PC-3 (cell line): ENCODE measurements at regions of chr10 and their contacts with region 1.

Region 1: DNA sequence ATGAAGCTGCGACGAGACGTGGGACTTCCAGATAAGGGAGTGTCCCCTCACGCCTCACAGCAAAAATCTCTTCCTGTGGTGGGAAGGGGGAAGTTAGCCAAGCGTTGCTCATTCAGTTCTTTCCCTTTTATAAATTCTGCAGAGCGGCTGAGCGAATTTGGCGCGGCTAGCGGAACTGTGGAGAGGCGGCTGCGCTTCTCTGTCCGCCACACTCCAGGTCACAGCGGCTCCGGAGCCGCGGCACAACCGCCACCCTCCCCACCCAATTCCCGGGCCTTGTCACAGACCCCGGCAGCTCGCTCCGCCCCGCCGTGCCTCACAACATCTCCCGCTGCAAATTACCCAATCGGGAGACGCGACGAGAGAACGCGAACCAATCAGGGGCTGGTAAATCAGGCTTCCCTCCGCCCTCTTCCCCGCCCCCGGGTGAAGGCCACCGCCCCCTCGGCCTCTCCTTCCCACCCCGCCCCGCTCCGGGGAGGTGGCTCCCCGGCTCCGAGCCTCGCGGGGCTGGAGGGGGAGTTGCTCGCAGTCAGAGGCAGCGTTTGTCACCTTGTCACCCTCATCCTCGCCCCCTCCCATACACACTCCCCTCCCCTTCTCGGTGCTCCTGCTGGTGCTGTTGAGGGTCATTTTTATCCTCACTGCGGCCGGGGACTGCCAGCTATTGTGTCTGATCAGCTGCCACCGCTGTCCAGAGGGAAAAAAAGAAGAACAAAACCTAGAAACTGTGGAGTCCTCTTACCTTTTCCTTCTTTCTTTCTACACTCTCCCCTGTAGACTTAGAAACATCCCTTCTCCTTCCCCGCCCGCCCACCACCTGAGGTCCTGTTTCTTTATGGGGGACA is 918 bp upstream of the ARHGAP21 start:
- DNase-seq: peak; percentile 94
- ATAC-seq: peak; percentile 73
- H3K4me3 ChIP-seq: peak overlapping the region; percentile 94
- H3K27ac ChIP-seq: peak overlapping the region; percentile 72
- H3K4me1 ChIP-seq: 0 out of 2 replicates have a peak, but pooled peaks cover 4% of the 10 kb centered on the region
- H3K27me3 ChIP-seq: no peaks in the 10 kb centered on the region
- CTCF ChIP-seq: no peak

Region 2: DNA sequence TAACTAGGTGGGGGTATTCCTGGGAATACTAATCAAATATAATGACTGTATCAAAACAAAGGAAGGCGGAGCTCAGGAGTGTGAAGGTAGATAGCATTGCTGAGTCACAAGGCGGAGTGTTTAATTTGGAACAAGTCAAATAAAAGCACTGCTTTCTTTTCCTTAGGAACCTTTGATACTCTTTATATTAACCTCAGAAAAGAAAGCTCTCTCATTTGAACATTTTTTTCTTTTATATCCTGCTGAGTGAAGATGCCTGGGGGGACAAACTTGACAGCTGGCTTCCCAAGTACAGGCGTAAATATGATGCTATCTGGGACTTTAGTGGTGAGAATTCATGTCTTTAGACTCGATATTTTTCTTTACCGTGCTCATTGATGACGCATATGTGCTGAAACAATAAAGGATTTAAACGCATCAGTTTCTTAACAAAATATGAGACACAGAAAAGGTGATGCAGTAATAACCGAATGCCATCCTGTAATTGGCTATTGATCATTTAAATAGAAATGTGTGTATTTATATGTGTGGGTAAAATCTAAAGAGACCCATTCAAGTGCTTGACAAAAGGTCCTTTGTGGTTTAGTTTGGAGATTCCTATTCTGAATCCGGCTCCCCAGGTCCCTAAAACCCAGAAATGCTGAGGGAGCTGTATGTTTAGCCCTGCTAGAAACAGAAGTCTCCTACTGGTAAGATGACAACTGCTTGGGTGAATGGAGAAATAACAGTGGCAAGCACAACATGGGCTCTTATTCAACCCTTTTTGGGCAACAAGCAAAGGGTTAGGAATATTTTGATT is 125.1 kb after region 1 on chr10:
- CTCF ChIA-PET with region 1: no interaction called
- POLR2A ChIA-PET with region 1: no interaction called
- intact Hi-C with region 1: loop called (anchors 2 kb)
- DNase-seq: peak; percentile 82
- ATAC-seq: peak; percentile 95
- H3K4me3 ChIP-seq: peak overlapping the region; percentile 44
- H3K27ac ChIP-seq: peak overlapping the region; percentile 98
- H3K4me1 ChIP-seq: peaks cover 29% of the 10 kb centered on the region
- H3K27me3 ChIP-seq: no peaks in the 10 kb centered on the region
- CTCF ChIP-seq: no peak

Region 3: GRCh38 chr10:24901686-24902399 is 177.2 kb after region 1 on chr10:
- CTCF ChIA-PET with region 1: no interaction called
- POLR2A ChIA-PET with region 1: no interaction called
- intact Hi-C with region 1: loop called (anchors 5 kb)
- DNase-seq: peak; percentile 93
- ATAC-seq: peak; percentile 91
- H3K4me3 ChIP-seq: peak overlapping the region; percentile 20; the same call in 1 of the 2 replicates
- H3K27ac ChIP-seq: peak overlapping the region; percentile 93
- H3K4me1 ChIP-seq: peaks cover 27% of the 10 kb centered on the region
- H3K27me3 ChIP-seq: no peaks in the 10 kb centered on the region
- CTCF ChIP-seq: no peak

Region 4: GRCh38 chr10:24962995-24963394 is 238.4 kb after region 1 on chr10:
- CTCF ChIA-PET with region 1: no interaction called
- POLR2A ChIA-PET with region 1: no interaction called
- intact Hi-C with region 1: loop called (anchors 5 kb)
- DNase-seq: peak; percentile 94
- ATAC-seq: peak; percentile 83
- H3K4me3 ChIP-seq: no peak overlapping the region
- H3K27ac ChIP-seq: peak overlapping the region; percentile 83
- H3K4me1 ChIP-seq: peaks cover 45% of the 10 kb centered on the region
- H3K27me3 ChIP-seq: no peaks in the 10 kb centered on the region
- CTCF ChIP-seq: no peak

Region 5: DNA sequence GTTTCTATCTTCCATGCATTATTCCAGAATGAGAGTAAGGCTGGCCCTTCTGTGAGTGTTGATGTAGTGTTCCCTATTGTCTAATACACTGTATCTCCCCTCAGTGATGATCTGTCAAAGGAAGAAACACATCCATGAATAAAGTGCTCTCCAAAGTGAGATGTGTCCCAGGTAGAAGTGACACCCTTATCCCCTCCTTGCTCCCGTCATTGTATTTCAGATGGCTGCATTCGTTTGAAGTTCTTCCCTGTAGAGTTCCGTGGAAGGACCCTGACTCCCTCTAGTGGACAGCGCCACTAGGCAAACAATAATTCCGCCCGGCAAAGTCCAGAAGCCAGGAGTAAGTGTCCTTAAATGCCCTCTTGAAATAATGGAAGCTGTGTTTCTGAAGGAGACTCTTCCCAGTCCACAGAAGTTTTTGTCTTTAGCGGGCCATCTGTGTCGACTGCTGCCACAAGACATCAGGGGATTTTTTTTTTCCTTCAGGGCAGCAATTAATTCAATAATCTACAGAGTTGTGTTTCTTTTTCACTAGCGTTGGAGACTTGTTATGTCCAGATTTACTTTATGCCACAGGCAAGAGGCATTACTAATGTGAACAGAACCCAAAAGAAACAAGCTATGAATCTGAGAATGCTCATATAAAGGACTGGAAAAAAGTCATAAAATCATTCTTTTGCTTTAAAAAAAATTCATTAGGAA is 356.4 kb after region 1 on chr10:
- CTCF ChIA-PET with region 1: interaction called, 4 read pairs
- POLR2A ChIA-PET with region 1: no interaction called
- intact Hi-C with region 1: loop called (anchors 5 kb)
- DNase-seq: peak; percentile 83
- ATAC-seq: peak; percentile 96
- H3K4me3 ChIP-seq: no peak overlapping the region
- H3K27ac ChIP-seq: no peak overlapping the region
- H3K4me1 ChIP-seq: 0 out of 2 replicates have a peak, but pooled peaks cover 3% of the 10 kb centered on the region
- H3K27me3 ChIP-seq: no peaks in the 10 kb centered on the region
- CTCF ChIP-seq: peak; percentile 86